Right ventricle myocardium superior (tissue), 1 donor: ENCODE measurements at regions of chr10 and their contacts with region 1.

Region 1: GRCh38 chr10:102064868-102065560 is at the start of gene HPS6:
- DNase-seq: peak; percentile 95
- ATAC-seq: peak; percentile 99
- total RNA-seq, gene HPS6: 9.5 TPM

Region 2: GRCh38 chr10:102114861-102115618 is 50.0 kb after region 1 on chr10:
- intact Hi-C with region 1: loop called (anchors 5 kb)
- DNase-seq: peak; percentile 95
- ATAC-seq: peak; percentile 79

Region 3: GRCh38 chr10:102280397-102281101 is 215.5 kb after region 1 on chr10:
- intact Hi-C with region 1: no loop called
- DNase-seq: no peak
- ATAC-seq: peak; percentile 84

Region 4: GRCh38 chr10:103111031-103111917 is 1046.3 kb after region 1 on chr10:
- intact Hi-C with region 1: no loop called
- DNase-seq: no peak
- ATAC-seq: peak; percentile 94